CD8-positive, alpha-beta memory T cell (primary cell): ENCODE measurements at regions of chr3 and their contacts with region 1.

Region 1: GRCh38 chr3:196837819-196838420 is 29.8 kb upstream of the SENP5 start:
- DNase-seq: peak; percentile 59 to 82 (median 62)
- H3K4me3 ChIP-seq: no peak overlapping the region
- H3K4me3 Mint-ChIP-seq: no peak overlapping the region
- H3K27ac ChIP-seq: no peak overlapping the region
- H3K27ac Mint-ChIP-seq: peak overlapping the region in 1 of 8 donors; percentile 5
- H3K4me1 ChIP-seq: no peaks in the 10 kb centered on the region
- H3K4me1 Mint-ChIP-seq: peaks cover 0 to 3% (median 2%) of the 10 kb centered on the region in 3 donors
- H3K27me3 ChIP-seq: no peaks in the 10 kb centered on the region
- H3K27me3 Mint-ChIP-seq: no peaks in the 10 kb centered on the region

Region 2: DNA sequence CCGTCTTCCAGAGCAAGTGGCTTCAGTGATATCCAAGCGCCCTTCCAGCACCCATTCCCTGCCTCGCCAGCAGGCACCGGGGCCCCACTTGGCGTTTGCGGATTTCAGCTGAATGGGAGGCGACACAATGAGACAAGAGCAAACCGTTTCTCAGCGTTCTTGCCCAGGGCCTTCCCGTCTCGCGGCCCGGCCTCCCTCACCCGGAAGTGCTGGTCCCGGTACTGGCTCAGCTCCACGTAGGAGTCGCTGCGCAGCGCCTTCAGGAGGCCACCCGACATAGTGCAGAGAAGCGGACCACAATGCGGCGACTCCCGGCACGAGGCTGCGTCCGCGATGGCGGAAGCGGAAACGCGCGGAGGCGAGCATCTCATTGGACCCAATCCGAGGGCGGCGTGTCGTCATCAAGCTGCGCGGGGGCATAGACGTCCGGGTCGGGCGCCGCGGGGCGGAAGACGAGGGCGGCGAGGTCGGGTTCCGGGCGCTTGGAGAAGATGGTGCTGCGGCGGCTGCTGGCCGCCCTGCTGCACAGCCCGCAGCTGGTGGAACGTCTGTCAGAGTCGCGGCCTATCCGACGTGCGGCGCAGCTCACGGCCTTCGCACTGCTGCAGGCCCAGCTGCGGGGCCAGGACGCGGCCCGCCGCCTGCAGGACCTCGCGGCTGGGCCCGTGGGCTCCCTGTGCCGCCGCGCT is 104.5 kb after region 1 on chr3 and contains the start of gene NCBP2:
- CTCF ChIA-PET with region 1: interaction called, 16 read pairs
- POLR2A ChIA-PET with region 1: no interaction called
- DNase-seq: peak; percentile 98 to 99 (median 99)
- H3K4me3 ChIP-seq: peak within 1 kb of the TSS; percentile 97
- H3K4me3 Mint-ChIP-seq: peak within 1 kb of the TSS; percentile 91 to 98 (median 97)
- H3K27ac ChIP-seq: peak within 1 kb of the TSS; percentile 96
- H3K27ac Mint-ChIP-seq: peak within 1 kb of the TSS; percentile 93 to 98 (median 98)
- H3K4me1 ChIP-seq: peaks cover 23% of the 10 kb centered on the region
- H3K4me1 Mint-ChIP-seq: peaks cover 38 to 51% (median 45%) of the 10 kb centered on the region in 3 donors
- H3K27me3 ChIP-seq: no peaks in the 10 kb centered on the region
- H3K27me3 Mint-ChIP-seq: peaks cover 0 to 1% of the 10 kb centered on the region in 2 donors
- total RNA-seq, gene NCBP2: 127 to 131 TPM

Region 3: GRCh38 chr3:196969660-196970546 is 132.0 kb after region 1 on chr3:
- CTCF ChIA-PET with region 1: interaction called, 31 read pairs
- POLR2A ChIA-PET with region 1: no interaction called
- DNase-seq: peak; percentile 53 to 71 (median 63)
- H3K4me3 ChIP-seq: peak overlapping the region; percentile 28
- H3K4me3 Mint-ChIP-seq: peak overlapping the region; percentile 68 to 89 (median 83)
- H3K27ac ChIP-seq: peak overlapping the region; percentile 51
- H3K27ac Mint-ChIP-seq: peak overlapping the region in 3 of 8 donors; percentile 43 to 88 (median 45)
- H3K4me1 ChIP-seq: no peaks in the 10 kb centered on the region
- H3K4me1 Mint-ChIP-seq: peaks cover 5 to 17% (median 8%) of the 10 kb centered on the region in 3 donors
- H3K27me3 ChIP-seq: no peaks in the 10 kb centered on the region
- H3K27me3 Mint-ChIP-seq: peaks cover 1 to 4% of the 10 kb centered on the region in 2 donors